ENCODE measurements at regions of chr5 and their contacts with region 1.

Region 1: DNA sequence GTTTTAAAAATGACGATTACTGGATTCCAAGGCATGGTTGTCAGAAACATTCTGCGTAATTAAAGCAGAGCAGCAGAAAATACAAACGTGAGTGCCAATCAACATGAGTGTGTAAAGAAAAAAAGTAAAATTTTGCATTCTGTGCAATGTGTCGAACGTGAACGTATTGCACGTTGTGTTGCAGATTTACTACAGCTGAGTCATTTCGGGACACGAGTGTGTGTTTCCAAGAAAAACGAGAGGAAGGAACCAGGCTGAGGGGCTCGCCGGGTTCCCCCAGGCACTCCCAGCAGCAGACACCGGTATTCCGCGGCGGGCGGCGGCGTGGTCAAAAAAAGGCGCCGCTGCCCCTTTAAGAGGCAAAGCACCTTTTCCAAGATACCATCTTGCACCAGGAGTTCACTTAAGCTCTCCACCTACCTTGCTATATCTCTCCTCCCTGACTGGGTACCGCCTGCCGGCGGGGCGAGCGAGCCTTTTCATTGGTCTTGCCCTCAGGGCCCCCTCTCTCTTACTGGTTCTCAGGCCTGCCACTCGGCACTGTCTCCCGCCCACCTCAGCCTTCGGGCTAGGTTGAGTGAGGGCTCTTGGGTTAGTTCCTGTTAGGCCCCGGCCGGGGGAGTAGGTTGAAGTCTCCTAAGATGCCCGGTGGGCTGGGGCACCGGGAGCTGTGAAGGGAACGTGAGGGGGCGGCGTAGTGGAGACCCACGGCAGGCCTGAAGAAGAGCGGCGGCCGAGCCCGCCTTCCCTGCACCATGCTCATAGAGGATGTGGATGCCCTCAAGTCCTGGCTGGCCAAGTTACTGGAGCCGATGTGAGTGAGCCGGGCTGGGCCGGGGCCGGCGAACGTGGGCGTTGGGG is at the start of gene RBM27:
- DNase-seq: peak; percentile 99
- H3K4me3 ChIP-seq: peak within 1 kb of the TSS; percentile 93 to 97 (median 94)
- H3K27ac ChIP-seq: peak within 1 kb of the TSS; percentile 66
- H3K4me1 ChIP-seq: peaks cover 12% of the 10 kb centered on the region
- H3K27me3 ChIP-seq: no peaks in the 10 kb centered on the region
- CTCF ChIP-seq: no peak
- POLR2A ChIP-seq: peak; percentile 71
- total RNA-seq, gene RBM27: 14.9 and 17.7 TPM in 2 replicates

Region 2: GRCh38 chr5:146185161-146185560 is 18.1 kb before region 1 on chr5:
- CTCF ChIA-PET with region 1: interaction called, 7 read pairs
- POLR2A ChIA-PET with region 1: interaction called, 4 read pairs
- dilution Hi-C with region 1: no loop called
- intact Hi-C with region 1: loop called (anchors 1 kb)
- DNase-seq: peak; percentile 28
- H3K4me3 ChIP-seq: no peak overlapping the region
- H3K27ac ChIP-seq: no peak overlapping the region
- H3K4me1 ChIP-seq: peaks cover 8% of the 10 kb centered on the region
- H3K27me3 ChIP-seq: no peaks in the 10 kb centered on the region
- CTCF ChIP-seq: no peak
- POLR2A ChIP-seq: no peak

Region 3: GRCh38 chr5:146249801-146250200 is 46.6 kb after region 1 on chr5:
- CTCF ChIA-PET with region 1: no interaction called
- POLR2A ChIA-PET with region 1: no interaction called
- dilution Hi-C with region 1: no loop called
- intact Hi-C with region 1: no loop called
- DNase-seq: no peak
- H3K4me3 ChIP-seq: no peak overlapping the region
- H3K27ac ChIP-seq: no peak overlapping the region
- H3K4me1 ChIP-seq: no peaks in the 10 kb centered on the region
- H3K27me3 ChIP-seq: no peaks in the 10 kb centered on the region
- CTCF ChIP-seq: no peak
- POLR2A ChIP-seq: no peak